ENCODE measurements at regions of chr3 and their contacts with region 1.

Region 1: GRCh38 chr3:40329071-40329470 is 19.6 kb downstream of the EIF1B start:
- DNase-seq: no peak
- H3K4me3 Mint-ChIP-seq: no peak overlapping the region
- H3K27ac Mint-ChIP-seq: no peak overlapping the region
- H3K4me1 Mint-ChIP-seq: no peaks in the 10 kb centered on the region
- H3K27me3 Mint-ChIP-seq: peaks cover 20% of the 10 kb centered on the region

Region 2: GRCh38 chr3:39724233-39724846 is 604.7 kb before region 1 on chr3:
- intact Hi-C with region 1: no loop called
- DNase-seq: no peak
- H3K4me3 Mint-ChIP-seq: no peak overlapping the region
- H3K27ac Mint-ChIP-seq: no peak overlapping the region
- H3K4me1 Mint-ChIP-seq: no peaks in the 10 kb centered on the region
- H3K27me3 Mint-ChIP-seq: no peaks in the 10 kb centered on the region

Region 3: GRCh38 chr3:41117398-41117870 is 788.4 kb after region 1 on chr3:
- intact Hi-C with region 1: loop called (anchors 5 kb)
- DNase-seq: peak; percentile 70
- H3K4me3 Mint-ChIP-seq: no peak overlapping the region
- H3K27ac Mint-ChIP-seq: peak overlapping the region; percentile 67
- H3K4me1 Mint-ChIP-seq: peaks cover 24% of the 10 kb centered on the region
- H3K27me3 Mint-ChIP-seq: no peaks in the 10 kb centered on the region